A673 (cell line): ENCODE measurements at regions of chr1 and their contacts with region 1.

Region 1: GRCh38 chr1:8097077-8097799 is 71.1 kb upstream of the ERRFI1 start:
- DNase-seq: peak; percentile 94
- H3K4me3 ChIP-seq: no peak overlapping the region
- H3K27ac ChIP-seq: peak overlapping the region; percentile 79
- H3K4me1 ChIP-seq: peaks cover 22% of the 10 kb centered on the region
- H3K27me3 ChIP-seq: peaks cover 7% of the 10 kb centered on the region
- CTCF ChIP-seq: no peak

Region 2: DNA sequence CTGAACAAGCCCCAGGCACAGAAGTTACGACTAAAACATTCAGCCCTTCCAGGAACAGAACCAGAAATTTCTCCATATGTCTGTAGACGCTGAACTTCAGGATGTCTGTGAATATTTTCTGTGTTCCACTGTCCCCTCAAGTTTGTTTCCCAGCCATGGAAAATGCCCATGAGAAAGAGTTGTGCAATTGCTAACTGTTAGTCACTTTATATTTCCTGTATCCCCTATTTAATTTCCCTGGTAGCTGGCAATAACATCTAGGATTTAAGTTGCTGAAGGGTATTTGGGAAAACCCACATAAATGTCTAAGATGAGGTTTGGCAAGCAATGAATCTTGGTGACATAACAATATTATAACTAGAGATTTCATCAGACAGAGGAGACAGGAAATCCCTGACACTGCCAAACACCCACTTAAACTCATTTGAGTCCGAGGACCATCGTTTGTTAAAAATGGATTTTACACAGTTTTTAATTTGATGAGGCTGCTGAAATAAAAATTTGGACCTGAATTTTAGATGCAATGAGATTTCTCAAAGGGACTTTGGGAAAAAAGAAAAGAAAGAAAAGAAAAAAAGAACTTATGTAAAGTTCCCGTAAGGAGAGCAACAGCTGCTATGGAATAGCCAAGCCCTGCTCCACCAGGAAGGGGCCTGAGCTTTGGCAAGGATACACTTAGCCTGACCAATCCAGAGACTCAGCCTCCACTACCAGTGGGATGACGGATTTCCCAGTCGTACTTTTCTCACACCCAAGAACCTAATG is 49.4 kb before region 1 on chr1:
- CTCF ChIA-PET with region 1: no interaction called
- POLR2A ChIA-PET with region 1: no interaction called
- intact Hi-C with region 1: loop called (anchors 5 kb)
- DNase-seq: peak; percentile 96
- H3K4me3 ChIP-seq: no peak overlapping the region
- H3K27ac ChIP-seq: peak overlapping the region; percentile 93
- H3K4me1 ChIP-seq: peaks cover 31% of the 10 kb centered on the region
- H3K27me3 ChIP-seq: no peaks in the 10 kb centered on the region
- CTCF ChIP-seq: no peak

Region 3: GRCh38 chr1:8169364-8170058 is 72.3 kb after region 1 on chr1:
- CTCF ChIA-PET with region 1: no interaction called
- POLR2A ChIA-PET with region 1: no interaction called
- intact Hi-C with region 1: loop called (anchors 5 kb)
- DNase-seq: peak; percentile 92
- H3K4me3 ChIP-seq: no peak overlapping the region
- H3K27ac ChIP-seq: peak overlapping the region; percentile 69
- H3K4me1 ChIP-seq: peaks cover 39% of the 10 kb centered on the region
- H3K27me3 ChIP-seq: no peaks in the 10 kb centered on the region
- CTCF ChIP-seq: no peak

Region 4: DNA sequence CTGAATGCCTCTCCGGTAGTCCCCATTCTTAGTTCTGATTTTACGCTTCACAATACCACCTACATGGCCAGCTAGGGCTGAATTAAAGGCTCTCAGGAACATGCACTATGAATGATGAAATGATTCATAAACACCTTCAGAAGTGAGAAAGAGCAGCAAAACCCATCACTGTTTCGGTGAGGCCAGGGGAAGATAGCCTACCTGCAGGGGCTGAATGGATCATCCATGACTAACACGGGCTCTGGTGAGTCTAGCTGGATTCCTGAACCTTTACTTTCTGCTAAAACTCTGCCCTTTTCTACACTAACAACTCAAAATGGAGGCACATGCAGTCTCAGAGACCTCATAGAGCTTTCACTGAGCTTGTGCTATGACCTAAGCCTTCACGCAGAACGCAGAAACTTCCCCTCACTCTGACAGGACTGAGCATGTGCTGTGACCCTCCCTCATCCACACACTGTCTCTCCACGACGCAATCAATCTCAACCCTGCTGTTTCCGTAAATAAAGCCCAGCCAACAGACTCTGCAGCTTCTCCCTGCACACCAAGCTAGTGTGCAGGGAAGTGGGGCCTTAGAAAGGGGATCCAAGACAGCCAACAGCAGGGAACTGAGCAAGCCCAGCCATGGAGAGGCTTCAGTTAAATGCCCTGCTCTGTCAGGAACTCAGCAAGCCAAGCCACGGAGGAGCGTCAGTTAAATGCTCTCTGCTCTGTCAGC is 428.5 kb after region 1 on chr1:
- CTCF ChIA-PET with region 1: no interaction called
- POLR2A ChIA-PET with region 1: no interaction called
- intact Hi-C with region 1: no loop called
- DNase-seq: peak; percentile 94
- H3K4me3 ChIP-seq: peak overlapping the region; percentile 27
- H3K27ac ChIP-seq: peak overlapping the region; percentile 35
- H3K4me1 ChIP-seq: peaks cover 31% of the 10 kb centered on the region
- H3K27me3 ChIP-seq: no peaks in the 10 kb centered on the region
- CTCF ChIP-seq: no peak